ENCODE measurements at regions of chr1 and their contacts with region 1.

Region 1: DNA sequence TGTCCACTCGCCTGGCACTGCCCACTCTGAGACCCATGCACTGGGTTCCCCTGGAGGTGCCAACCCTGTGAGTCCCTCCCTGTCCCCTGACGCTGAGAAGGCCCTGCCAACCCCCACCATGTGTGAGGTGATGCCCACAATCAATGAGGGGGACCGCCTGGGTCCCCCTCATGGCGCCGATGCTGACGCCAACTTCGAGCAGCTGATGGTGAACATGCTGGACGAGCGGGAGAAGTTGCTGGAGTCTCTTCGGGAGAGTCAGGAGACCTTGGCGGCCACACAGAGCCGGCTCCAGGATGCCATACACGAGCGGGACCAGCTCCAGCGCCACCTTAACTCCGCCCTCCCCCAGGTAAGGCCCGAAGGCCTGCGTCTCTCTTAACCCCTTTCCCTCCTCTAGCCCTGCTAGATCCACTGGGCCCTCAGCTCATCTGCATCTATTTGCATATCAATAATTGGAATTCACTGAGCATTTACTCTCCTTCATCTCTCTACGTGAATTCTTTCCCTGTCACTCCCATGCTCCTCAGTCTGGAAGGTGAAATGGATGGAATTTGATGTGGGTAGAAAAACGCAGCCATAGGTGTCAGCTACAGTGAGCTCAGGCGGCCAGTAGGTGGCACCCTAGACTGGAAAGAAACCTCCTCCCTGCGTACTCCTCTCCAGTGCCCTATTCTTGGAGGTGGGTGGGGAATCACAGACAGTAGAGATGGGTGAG is 12.8 kb downstream of the PPFIA4 start:
- DNase-seq: peak; percentile 77
- ATAC-seq: peak; percentile 89
- H3K4me3 Mint-ChIP-seq: no peak overlapping the region
- H3K27ac Mint-ChIP-seq: no peak overlapping the region
- H3K4me1 Mint-ChIP-seq: peaks cover 6% of the 10 kb centered on the region
- H3K27me3 Mint-ChIP-seq: peaks cover 4% of the 10 kb centered on the region
- CTCF ChIP-seq: peak; percentile 77

Region 2: DNA sequence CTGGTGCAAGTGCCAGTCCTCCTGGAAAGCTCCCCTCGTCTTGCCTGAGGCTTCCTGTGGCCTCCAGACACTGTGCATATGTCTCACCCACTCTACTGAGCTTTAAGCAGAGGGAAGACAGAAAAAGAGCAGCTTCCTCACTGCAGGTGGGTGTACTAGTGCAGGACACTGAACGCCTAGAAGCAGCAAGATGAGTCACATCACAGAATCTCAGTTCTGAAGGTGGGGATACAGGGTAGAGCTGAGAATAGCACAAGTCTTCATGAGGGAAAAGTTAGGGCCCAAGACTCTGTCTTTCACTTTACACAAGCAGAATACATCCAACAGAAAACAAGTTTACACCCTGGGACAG is 190.9 kb before region 1 on chr1:
- CTCF ChIA-PET with region 1: no interaction called
- POLR2A ChIA-PET with region 1: no interaction called
- intact Hi-C with region 1: no loop called
- DNase-seq: peak; percentile 31
- ATAC-seq: peak; percentile 78
- H3K4me3 Mint-ChIP-seq: no peak overlapping the region
- H3K27ac Mint-ChIP-seq: no peak overlapping the region
- H3K4me1 Mint-ChIP-seq: peaks cover 6% of the 10 kb centered on the region
- H3K27me3 Mint-ChIP-seq: no peaks in the 10 kb centered on the region
- CTCF ChIP-seq: no peak

Region 3: DNA sequence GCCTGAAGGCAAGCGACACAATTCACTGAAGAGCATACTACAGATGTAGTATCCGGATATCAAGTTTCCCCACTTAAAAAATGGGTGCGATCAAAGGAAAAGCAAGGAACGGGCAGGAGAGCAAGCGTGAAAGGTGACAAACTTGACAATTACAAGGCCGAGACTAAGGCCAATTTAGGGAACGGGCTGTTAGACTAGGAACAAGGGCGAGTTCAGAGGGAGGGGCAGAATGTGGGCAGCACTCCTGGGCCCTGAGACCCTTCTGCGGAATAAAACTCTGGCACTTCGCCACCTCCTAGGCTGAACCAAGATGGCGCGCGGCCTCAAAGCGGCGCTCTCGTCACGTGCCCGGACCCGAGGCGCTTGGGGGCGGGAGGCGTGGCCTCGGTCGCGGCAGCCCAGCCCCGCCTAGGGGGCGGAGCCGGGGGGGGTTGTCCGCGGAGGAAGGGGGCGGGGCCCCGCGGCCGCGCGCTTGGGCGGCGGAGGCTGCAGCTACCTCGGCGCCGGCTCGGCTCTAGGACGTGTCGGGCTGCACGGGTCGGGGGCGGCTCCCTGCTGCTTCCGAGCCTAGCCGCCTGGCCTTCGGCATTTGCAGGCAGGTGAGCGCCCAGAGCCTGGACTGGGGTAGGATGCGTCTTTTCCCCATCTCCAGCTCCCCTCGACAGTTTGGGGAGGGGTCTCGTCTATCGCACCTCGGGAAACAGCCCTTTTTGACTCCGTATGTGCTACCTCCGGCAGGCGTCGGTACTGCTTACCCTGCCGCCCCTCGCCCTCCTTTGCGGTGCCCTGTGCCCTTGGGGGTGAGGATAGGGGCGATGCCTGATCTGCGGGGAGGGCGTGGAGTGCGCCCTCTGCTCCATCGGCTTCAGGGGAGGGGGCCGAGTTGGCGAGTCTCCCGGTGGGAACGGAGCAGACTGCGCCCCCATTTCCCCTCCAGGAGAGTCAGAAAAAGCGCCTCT is 12.7 kb before region 1 on chr1 and contains the start of gene PPFIA4:
- CTCF ChIA-PET with region 1: interaction called, 54 read pairs
- POLR2A ChIA-PET with region 1: interaction called, 11 read pairs
- intact Hi-C with region 1: no loop called
- DNase-seq: peak; percentile 92
- ATAC-seq: peak; percentile 97
- H3K4me3 Mint-ChIP-seq: peak within 1 kb of the TSS; percentile 89
- H3K27ac Mint-ChIP-seq: peak within 1 kb of the TSS; percentile 82
- H3K4me1 Mint-ChIP-seq: peaks cover 17% of the 10 kb centered on the region
- H3K27me3 Mint-ChIP-seq: peaks cover 10% of the 10 kb centered on the region
- CTCF ChIP-seq: no peak
- total RNA-seq, gene PPFIA4: 78.8 to 79.9 TPM

Region 4: DNA sequence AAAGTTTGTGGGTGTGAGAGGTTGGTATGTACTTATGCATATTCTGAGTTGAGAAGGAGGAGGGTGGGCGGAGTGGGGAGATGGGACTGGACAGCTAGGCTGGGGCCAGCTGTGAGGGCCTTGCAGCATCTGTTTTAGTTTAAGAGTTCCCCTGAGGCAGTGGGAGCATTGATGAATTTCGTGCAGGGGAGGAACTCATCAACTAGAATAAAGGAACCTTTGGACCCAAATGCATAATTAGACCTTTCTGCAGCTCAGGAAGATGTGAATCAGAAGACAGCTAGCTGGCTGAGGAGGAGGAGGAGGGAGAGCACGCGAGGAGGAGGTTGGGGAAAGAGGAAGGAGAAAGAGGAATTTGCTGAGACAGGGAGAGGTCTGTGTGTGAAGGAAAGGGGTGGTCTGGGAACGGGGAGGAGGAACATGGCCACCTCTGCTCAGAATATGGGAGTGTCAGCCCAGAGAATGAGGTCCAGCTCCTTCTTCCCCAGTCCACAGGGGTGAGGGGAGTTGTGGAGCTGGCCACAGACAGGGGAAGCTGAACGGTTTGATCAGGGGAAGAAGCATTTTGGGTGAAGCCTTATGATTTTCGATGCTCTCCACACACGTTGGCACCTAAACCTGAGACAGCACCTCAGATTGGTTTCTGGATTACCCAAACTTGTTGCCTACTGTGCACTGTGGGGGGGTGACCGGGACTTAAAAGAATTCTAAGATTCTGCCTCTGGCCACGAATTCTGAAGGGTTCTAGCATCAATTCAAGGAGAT is 19.0 kb after region 1 on chr1:
- CTCF ChIA-PET with region 1: interaction called, 30 read pairs
- POLR2A ChIA-PET with region 1: no interaction called
- intact Hi-C with region 1: no loop called
- DNase-seq: no peak
- ATAC-seq: no peak
- H3K4me3 Mint-ChIP-seq: no peak overlapping the region
- H3K27ac Mint-ChIP-seq: no peak overlapping the region
- H3K4me1 Mint-ChIP-seq: no peaks in the 10 kb centered on the region
- H3K27me3 Mint-ChIP-seq: peaks cover 4% of the 10 kb centered on the region
- CTCF ChIP-seq: no peak

Region 5: GRCh38 chr1:203148125-203148524 is 109.1 kb after region 1 on chr1:
- CTCF ChIA-PET with region 1: interaction called, 11 read pairs
- POLR2A ChIA-PET with region 1: no interaction called
- intact Hi-C with region 1: no loop called
- DNase-seq: no peak
- ATAC-seq: no peak
- H3K4me3 Mint-ChIP-seq: no peak overlapping the region
- H3K27ac Mint-ChIP-seq: no peak overlapping the region
- H3K4me1 Mint-ChIP-seq: no peaks in the 10 kb centered on the region
- H3K27me3 Mint-ChIP-seq: no peaks in the 10 kb centered on the region
- CTCF ChIP-seq: peak; percentile 55

Region 6: DNA sequence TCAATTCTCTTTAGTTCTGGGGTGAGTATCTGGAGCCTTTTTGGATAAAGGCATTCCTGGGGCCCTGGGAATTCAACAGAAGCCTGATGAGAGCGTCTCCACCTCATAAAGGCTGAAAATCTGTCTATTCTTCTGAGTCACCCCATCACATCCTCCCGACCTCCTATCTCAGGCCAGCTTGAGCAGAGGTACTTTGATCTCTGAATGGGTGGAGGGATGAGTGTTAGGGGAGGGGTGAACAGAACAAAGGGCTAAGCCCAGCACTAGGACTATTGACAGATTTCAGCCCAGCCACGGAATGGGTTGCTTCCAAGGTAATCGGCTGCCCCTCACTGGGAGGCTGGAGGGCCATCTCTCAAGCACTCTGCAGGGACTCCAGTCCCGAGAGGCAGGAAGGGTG is 139.0 kb after region 1 on chr1:
- CTCF ChIA-PET with region 1: interaction called, 58 read pairs
- POLR2A ChIA-PET with region 1: no interaction called
- intact Hi-C with region 1: loop called (anchors 5 kb)
- DNase-seq: no peak
- ATAC-seq: no peak
- H3K4me3 Mint-ChIP-seq: no peak overlapping the region
- H3K27ac Mint-ChIP-seq: no peak overlapping the region
- H3K4me1 Mint-ChIP-seq: no peaks in the 10 kb centered on the region
- H3K27me3 Mint-ChIP-seq: no peaks in the 10 kb centered on the region
- CTCF ChIP-seq: no peak

Region 7: DNA sequence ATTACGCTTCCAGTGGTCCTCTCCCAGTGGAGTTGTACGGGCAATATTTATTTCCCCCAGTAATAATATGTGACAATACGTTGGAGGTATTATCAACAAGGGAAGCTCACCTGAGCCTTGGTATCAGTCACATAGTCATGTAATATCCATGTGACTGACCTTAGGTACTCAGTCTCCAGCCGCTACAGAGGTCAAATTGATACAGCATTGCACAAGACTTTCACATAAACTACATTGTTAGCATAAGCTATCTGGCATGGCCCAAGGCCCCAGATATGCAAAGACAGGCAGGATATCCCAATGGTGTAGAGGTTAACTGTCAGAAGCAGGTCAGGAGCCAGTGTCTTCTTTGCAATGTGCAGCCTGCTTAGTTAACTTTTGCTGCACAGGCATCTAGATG is 205.7 kb after region 1 on chr1:
- CTCF ChIA-PET with region 1: no interaction called
- POLR2A ChIA-PET with region 1: no interaction called
- intact Hi-C with region 1: no loop called
- DNase-seq: no peak
- ATAC-seq: no peak
- H3K4me3 Mint-ChIP-seq: no peak overlapping the region
- H3K27ac Mint-ChIP-seq: no peak overlapping the region
- H3K4me1 Mint-ChIP-seq: no peaks in the 10 kb centered on the region
- H3K27me3 Mint-ChIP-seq: peaks cover 26% of the 10 kb centered on the region
- CTCF ChIP-seq: no peak

Measured in activated CD8-positive, alpha-beta T cell treated with anti-CD3 and anti-CD28 coated beads for 36 hours (primary cell).